Motor neuron (in vitro differentiated cells): ENCODE measurements at regions of chr15 and their contacts with region 1.

Region 1: DNA sequence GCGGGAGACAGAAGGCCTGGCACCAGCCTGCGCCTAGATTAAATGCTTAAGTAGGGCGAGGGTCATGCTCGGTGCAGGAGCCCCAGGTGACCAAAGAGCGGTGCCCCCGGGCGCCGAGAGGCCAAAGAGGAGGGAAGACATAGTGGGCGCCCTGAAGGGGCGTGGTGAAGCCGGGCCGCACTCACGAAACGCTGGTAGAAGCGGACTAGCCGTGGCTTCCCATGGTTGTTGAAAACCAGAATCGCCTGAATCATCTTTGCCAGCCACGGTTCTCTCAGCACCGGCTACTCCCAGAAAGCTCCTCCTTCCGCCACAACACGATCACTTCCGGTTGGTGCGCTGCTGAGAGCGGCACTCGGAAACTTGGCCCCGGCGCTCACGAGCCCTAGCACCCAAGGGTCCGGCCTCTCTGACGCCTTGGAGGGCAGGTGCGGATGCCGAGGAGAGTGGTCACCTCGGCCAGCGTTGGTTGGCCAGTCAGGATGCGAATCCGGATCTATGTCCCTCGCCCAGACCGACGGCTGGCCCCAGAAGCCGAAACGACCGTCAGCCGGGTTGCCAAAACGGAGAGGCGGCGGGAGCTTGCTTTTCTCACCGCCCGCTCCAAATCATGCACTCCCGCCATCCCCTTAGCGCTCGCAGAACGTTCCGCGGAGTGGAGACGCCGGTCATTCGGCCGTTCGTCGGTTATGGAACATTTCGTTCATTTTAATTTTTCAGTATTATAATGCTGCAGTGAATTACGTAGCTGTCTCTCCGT is at the start of gene AP3S2:
- ATAC-seq: peak; percentile 93 to 99 (median 98)
- H3K4me3 ChIP-seq: peak within 1 kb of the TSS; percentile 67 to 88 (median 81)
- H3K27ac ChIP-seq: peak within 1 kb of the TSS; percentile 81 to 89
- H3K4me1 ChIP-seq: peaks cover 0 to 7% of the 10 kb centered on the region in 2 donors
- total RNA-seq, gene AP3S2: 35.5 to 68.8 (median 47.3) TPM

Region 2: GRCh38 chr15:90071208-90071807 is 177.4 kb after region 1 on chr15:
- in situ Hi-C with region 1: loop called in 1 of 9 experiments (anchors 25 kb)
- ATAC-seq: peak; percentile 75 to 97 (median 82)
- H3K4me3 ChIP-seq: no peak overlapping the region
- H3K27ac ChIP-seq: no peak overlapping the region
- H3K4me1 ChIP-seq: no peaks in the 10 kb centered on the region

Region 3: GRCh38 chr15:90086868-90087268 is 193.0 kb after region 1 on chr15:
- in situ Hi-C with region 1: loop called in 1 of 9 experiments (anchors 10 kb)
- ATAC-seq: peak in 7 of 8 experiments; percentile 28 to 79 (median 58)
- H3K4me3 ChIP-seq: no peak overlapping the region
- H3K27ac ChIP-seq: no peak overlapping the region
- H3K4me1 ChIP-seq: no peaks in the 10 kb centered on the region